WTC11 (cell line): ENCODE measurements at regions of chr18 and their contacts with region 1.

Region 1: DNA sequence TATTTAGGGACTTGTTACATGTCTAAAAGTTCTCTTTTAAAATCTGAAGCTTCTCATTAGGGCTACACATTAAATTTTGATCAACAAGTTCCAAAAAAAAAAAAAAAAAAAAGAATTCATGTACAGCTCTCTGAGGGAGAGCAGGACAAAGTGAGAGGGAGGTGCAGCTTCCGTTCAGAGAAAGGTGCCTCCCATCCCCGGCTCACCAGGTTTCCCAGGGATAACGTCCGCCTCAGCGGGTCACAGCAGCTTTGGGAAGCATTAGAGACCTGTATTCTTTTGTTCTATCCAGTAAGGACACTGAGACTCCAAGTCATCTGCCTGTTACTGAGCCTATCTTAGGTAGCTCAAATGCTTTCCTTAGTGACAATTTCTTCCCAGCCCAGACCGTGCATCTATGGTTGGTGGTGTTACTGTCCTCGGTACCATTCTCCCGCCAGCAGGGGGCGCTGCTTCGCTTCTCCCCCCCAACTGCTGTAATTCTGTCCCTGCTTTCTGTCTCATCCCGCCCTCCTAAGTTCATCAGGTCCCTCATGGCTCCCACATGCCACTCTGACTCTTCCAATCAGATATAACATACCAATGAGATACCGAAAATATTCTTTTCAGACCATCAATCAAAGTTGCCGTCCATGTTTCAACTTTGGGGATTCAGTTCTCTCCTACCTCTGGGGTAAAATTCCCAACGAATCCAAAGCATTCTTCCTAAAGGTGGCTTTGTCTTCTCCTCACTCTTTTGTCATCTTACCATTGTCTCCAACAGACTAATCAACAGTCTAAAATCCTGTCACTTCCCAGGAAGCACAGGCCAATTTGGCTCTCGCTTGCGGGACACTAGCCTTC is 466.5 kb downstream of the METTL4 start:
- DNase-seq: peak; percentile 68
- ATAC-seq: peak; percentile 99
- H3K4me3 Mint-ChIP-seq: no peak overlapping the region
- H3K27ac Mint-ChIP-seq: no peak overlapping the region
- H3K4me1 Mint-ChIP-seq: no peaks in the 10 kb centered on the region
- H3K27me3 Mint-ChIP-seq: no peaks in the 10 kb centered on the region
- CTCF ChIP-seq: peak; percentile 91

Region 2: DNA sequence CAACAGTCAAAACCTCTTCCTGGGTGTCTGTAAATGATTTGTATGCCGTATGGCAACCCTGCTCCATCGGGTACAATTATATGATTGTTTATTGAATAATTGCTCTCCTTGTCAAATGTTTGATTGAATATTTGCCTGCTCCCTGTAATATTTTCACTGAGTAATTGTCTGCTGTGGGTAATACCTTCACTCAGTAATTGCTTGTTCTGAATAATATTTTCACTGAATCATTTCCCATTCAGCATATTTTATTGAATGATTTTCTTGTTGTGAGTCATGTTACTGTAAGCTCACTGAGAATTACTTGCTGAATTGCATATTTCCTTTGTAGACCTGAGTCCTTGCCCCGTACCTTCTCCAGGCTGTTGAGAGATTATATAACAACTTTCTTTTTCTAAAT is 68.8 kb before region 1 on chr18:
- CTCF ChIA-PET with region 1: no interaction called
- POLR2A ChIA-PET with region 1: no interaction called
- DNase-seq: no peak
- ATAC-seq: no peak
- H3K4me3 Mint-ChIP-seq: no peak overlapping the region
- H3K27ac Mint-ChIP-seq: no peak overlapping the region
- H3K4me1 Mint-ChIP-seq: no peaks in the 10 kb centered on the region
- H3K27me3 Mint-ChIP-seq: no peaks in the 10 kb centered on the region
- CTCF ChIP-seq: no peak

Region 3: GRCh38 chr18:2083691-2084090 is 21.1 kb before region 1 on chr18:
- CTCF ChIA-PET with region 1: interaction called, 16 read pairs
- POLR2A ChIA-PET with region 1: no interaction called
- DNase-seq: peak; percentile 35
- ATAC-seq: peak; percentile 86
- H3K4me3 Mint-ChIP-seq: no peak overlapping the region
- H3K27ac Mint-ChIP-seq: no peak overlapping the region
- H3K4me1 Mint-ChIP-seq: no peaks in the 10 kb centered on the region
- H3K27me3 Mint-ChIP-seq: no peaks in the 10 kb centered on the region; the same call in 1 of the 2 replicates
- CTCF ChIP-seq: no peak

Region 4: GRCh38 chr18:2089396-2089795 is 15.4 kb before region 1 on chr18:
- CTCF ChIA-PET with region 1: interaction called, 44 read pairs
- POLR2A ChIA-PET with region 1: no interaction called
- DNase-seq: no peak
- ATAC-seq: no peak
- H3K4me3 Mint-ChIP-seq: no peak overlapping the region
- H3K27ac Mint-ChIP-seq: no peak overlapping the region
- H3K4me1 Mint-ChIP-seq: peaks cover 11% of the 10 kb centered on the region
- H3K27me3 Mint-ChIP-seq: no peaks in the 10 kb centered on the region; the same call in 1 of the 2 replicates
- CTCF ChIP-seq: no peak

Region 5: GRCh38 chr18:2121221-2121620 is 16.4 kb after region 1 on chr18:
- CTCF ChIA-PET with region 1: interaction called, 14 read pairs
- POLR2A ChIA-PET with region 1: no interaction called
- DNase-seq: no peak
- ATAC-seq: no peak; the same call in 1 of the 2 replicates
- H3K4me3 Mint-ChIP-seq: no peak overlapping the region
- H3K27ac Mint-ChIP-seq: no peak overlapping the region
- H3K4me1 Mint-ChIP-seq: no peaks in the 10 kb centered on the region
- H3K27me3 Mint-ChIP-seq: no peaks in the 10 kb centered on the region
- CTCF ChIP-seq: no peak

Region 6: DNA sequence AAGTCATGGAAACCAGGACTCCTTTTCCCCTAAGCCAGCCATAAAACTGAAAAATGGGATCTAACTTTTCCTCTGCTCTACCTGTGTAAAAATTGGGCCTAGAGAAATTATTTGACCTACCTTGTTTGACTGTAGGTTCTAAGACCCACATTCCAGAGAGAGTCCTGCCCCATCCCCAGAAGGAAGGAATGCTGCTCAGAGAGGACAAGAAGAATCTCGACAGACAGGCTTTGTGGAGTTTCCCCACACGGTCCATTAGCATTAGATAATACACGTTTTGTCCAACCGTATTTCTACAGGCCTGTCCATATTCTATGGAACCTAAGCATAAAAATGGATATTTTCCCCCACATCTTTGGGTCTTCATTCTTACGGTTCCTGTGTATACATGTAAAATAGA is 63.2 kb after region 1 on chr18:
- CTCF ChIA-PET with region 1: no interaction called
- POLR2A ChIA-PET with region 1: no interaction called
- DNase-seq: no peak
- ATAC-seq: no peak
- H3K4me3 Mint-ChIP-seq: no peak overlapping the region
- H3K27ac Mint-ChIP-seq: no peak overlapping the region
- H3K4me1 Mint-ChIP-seq: peaks cover 4% of the 10 kb centered on the region
- H3K27me3 Mint-ChIP-seq: no peaks in the 10 kb centered on the region; the same call in 1 of the 2 replicates
- CTCF ChIP-seq: no peak

Region 7: GRCh38 chr18:2223849-2224248 is 119.0 kb after region 1 on chr18:
- CTCF ChIA-PET with region 1: interaction called, 24 read pairs
- POLR2A ChIA-PET with region 1: no interaction called
- DNase-seq: peak; percentile 15
- ATAC-seq: peak; percentile 75
- H3K4me3 Mint-ChIP-seq: no peak overlapping the region
- H3K27ac Mint-ChIP-seq: no peak overlapping the region
- H3K4me1 Mint-ChIP-seq: no peaks in the 10 kb centered on the region
- H3K27me3 Mint-ChIP-seq: no peaks in the 10 kb centered on the region; the same call in 1 of the 2 replicates
- CTCF ChIP-seq: no peak; the same call in 1 of the 2 replicates

Region 8: DNA sequence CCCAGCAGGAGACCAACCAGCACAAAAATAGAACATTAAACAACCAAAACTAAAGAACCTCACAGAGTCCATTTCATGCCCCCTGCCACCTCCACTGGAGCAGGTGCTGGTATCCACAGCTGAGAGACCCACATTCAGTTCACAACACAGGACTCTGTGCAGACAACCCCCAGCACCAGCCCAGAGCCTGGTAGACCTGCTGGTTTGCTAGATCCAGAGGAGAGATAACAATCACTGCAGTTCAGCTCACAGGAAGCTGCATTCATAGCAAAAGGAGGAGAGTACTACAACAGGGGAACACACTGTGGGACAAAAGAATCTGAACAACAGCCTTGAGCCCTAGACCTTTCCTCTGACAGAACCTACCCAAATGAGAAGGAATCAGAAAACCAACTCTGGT is 139.8 kb after region 1 on chr18:
- CTCF ChIA-PET with region 1: no interaction called
- POLR2A ChIA-PET with region 1: no interaction called
- DNase-seq: no peak
- ATAC-seq: peak; percentile 52; the same call in 1 of the 2 replicates
- H3K4me3 Mint-ChIP-seq: no peak overlapping the region
- H3K27ac Mint-ChIP-seq: no peak overlapping the region
- H3K4me1 Mint-ChIP-seq: peaks cover 35% of the 10 kb centered on the region
- H3K27me3 Mint-ChIP-seq: no peaks in the 10 kb centered on the region; the same call in 1 of the 2 replicates
- CTCF ChIP-seq: no peak

Region 9: DNA sequence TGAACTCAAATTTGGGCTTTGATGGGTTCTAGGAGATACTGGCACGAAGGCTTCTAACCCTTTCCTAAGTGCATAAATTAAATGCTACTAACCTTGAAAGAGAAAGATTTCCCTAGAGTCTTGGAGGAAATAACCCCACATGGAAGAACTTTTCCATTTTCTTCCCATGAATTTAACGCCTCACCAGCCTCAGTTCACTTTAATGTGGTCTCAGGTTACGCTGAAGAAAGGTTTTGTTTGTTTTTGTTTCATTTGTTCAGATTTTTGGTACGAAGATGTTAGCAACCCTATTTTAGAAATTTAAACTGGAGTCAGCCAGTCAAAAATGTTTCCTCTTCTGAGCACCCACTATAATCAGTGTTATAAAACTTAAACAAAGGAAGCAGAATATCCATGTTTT is 435.7 kb after region 1 on chr18:
- CTCF ChIA-PET with region 1: interaction called, 15 read pairs
- POLR2A ChIA-PET with region 1: no interaction called
- DNase-seq: no peak
- ATAC-seq: no peak
- H3K4me3 Mint-ChIP-seq: no peak overlapping the region
- H3K27ac Mint-ChIP-seq: peak overlapping the region; percentile 31; the same call in 1 of the 2 replicates
- H3K4me1 Mint-ChIP-seq: peaks cover 5% of the 10 kb centered on the region
- H3K27me3 Mint-ChIP-seq: no peaks in the 10 kb centered on the region
- CTCF ChIP-seq: no peak